PC-9 (cell line): ENCODE measurements at regions of chr3 and their contacts with region 1.

Region 1: DNA sequence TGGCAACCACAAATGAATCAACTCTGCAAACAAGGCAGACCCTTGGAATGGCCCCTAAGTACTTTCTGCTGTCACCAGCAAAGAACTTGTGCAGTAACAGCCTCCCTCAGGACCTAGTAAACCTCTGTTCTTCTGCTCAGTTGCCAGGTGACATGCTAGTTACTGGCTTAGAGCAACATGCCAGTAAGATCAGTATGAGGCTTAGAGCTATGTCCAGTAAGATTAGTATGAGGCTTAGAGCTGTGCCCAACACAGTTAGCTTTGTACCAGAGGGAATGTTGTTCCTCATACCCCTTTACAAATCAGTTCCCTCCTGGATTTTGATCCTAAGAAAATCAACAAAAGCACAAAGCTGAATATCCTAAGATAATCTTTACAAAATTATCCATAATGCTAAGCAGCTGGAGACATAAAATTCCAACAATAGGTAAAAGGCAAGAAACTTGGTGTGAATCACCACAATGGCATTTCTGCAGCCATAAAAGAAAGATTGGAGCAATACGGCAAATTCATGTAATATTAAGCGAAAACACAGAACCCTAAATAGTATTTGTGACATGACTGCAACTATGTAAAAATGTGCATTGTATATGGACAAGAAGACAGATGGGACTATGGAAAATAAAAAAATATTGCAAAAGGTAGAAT is 107.3 kb upstream of the LPP start:
- DNase-seq: peak in 1 of 2 experiments; percentile 57
- H3K4me3 ChIP-seq: no peak overlapping the region
- H3K27ac ChIP-seq: no peak overlapping the region
- H3K4me1 ChIP-seq: peaks cover 28% of the 10 kb centered on the region
- H3K27me3 ChIP-seq: no peaks in the 10 kb centered on the region
- CTCF ChIP-seq: no peak

Region 2: GRCh38 chr3:187960820-187961219 is 85.9 kb before region 1 on chr3:
- CTCF ChIA-PET with region 1: no interaction called
- POLR2A ChIA-PET with region 1: interaction called, 13 read pairs
- intact Hi-C with region 1: no loop called
- DNase-seq: no peak
- H3K4me3 ChIP-seq: no peak overlapping the region
- H3K27ac ChIP-seq: no peak overlapping the region
- H3K4me1 ChIP-seq: peaks cover 42% of the 10 kb centered on the region
- H3K27me3 ChIP-seq: no peaks in the 10 kb centered on the region
- CTCF ChIP-seq: no peak

Region 3: GRCh38 chr3:188197388-188197847 is 150.7 kb after region 1 on chr3:
- CTCF ChIA-PET with region 1: no interaction called
- POLR2A ChIA-PET with region 1: no interaction called
- intact Hi-C with region 1: no loop called
- DNase-seq: peak; percentile 61 to 70
- H3K4me3 ChIP-seq: no peak overlapping the region
- H3K27ac ChIP-seq: no peak overlapping the region
- H3K4me1 ChIP-seq: peaks cover 24% of the 10 kb centered on the region
- H3K27me3 ChIP-seq: no peaks in the 10 kb centered on the region
- CTCF ChIP-seq: no peak